Activated naive CD4-positive, alpha-beta T cell treated with anti-CD3 and anti-CD28 coated beads for 36 hours (primary cell): ENCODE measurements at regions of chr16 and their contacts with region 1.

Region 1: DNA sequence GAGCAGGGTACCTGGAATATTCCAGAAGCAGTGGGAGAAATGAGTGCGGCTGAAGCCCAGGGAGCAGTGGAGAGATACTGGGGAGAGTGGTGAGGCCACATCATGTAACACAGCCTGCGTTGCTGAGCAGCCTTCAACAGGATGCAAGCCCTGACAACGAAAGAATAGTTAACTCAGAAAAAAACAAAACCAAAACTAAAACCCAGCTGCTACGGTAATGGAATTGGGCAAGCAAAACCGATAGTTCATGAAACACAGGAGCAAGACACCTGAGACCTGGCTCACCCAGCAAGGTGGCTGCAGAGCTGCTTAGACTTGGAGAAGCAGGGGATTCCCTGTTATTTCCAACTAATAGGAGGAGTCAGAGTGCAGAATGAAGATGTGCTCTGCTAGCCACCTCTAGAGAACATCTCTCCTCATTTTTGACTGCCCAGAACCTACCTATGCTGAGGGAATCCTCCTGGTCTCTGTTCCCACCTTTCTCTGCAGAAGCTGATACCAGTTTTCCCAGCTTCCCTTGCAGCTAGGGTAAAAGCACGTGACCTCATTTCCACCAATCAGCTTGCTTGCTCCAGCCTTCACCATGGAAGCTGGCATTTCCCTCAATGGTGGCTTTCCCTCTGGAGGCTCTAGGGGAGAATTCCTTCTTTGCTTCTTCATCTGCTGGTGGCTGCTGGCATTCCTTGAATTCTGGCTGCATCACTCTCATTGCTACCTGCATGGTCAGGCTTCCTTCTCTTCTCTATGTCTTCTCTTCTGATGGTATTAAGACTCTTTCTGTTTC is 59.4 kb upstream of the XYLT1 start:
- DNase-seq: peak; percentile 50
- H3K4me3 Mint-ChIP-seq: peak overlapping the region; percentile 65
- H3K27ac Mint-ChIP-seq: peak overlapping the region; percentile 50
- H3K4me1 Mint-ChIP-seq: peaks cover 13% of the 10 kb centered on the region
- H3K27me3 Mint-ChIP-seq: no peaks in the 10 kb centered on the region

Region 2: GRCh38 chr16:17515421-17516210 is 14.6 kb before region 1 on chr16:
- CTCF ChIA-PET with region 1: interaction called, 3 read pairs
- intact Hi-C with region 1: loop called (anchors 1 kb)
- DNase-seq: no peak
- H3K4me3 Mint-ChIP-seq: no peak overlapping the region
- H3K27ac Mint-ChIP-seq: no peak overlapping the region
- H3K4me1 Mint-ChIP-seq: no peaks in the 10 kb centered on the region
- H3K27me3 Mint-ChIP-seq: peaks cover 3% of the 10 kb centered on the region

Region 3: DNA sequence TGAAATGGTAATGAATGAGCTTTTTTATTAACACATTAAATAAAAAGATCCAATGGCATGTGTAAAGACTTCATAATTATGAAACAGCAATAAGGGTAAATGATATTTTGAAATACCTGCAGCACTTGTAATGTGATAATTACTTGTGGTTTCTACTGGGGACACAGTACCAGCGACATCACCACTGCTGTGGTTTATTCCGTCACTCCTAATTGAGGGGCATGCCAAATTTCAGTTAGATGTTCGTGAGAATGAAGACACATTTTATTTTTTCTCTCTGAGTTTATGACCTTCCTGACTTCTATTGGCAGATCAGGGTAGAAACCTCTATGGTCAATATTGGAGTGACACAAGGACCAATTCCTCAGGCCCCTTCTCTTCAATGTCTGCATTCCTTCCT is 72.5 kb after region 1 on chr16:
- CTCF ChIA-PET with region 1: no interaction called
- intact Hi-C with region 1: no loop called
- DNase-seq: no peak
- H3K4me3 Mint-ChIP-seq: no peak overlapping the region
- H3K27ac Mint-ChIP-seq: no peak overlapping the region
- H3K4me1 Mint-ChIP-seq: peaks cover 13% of the 10 kb centered on the region
- H3K27me3 Mint-ChIP-seq: peaks cover 14% of the 10 kb centered on the region

Region 4: DNA sequence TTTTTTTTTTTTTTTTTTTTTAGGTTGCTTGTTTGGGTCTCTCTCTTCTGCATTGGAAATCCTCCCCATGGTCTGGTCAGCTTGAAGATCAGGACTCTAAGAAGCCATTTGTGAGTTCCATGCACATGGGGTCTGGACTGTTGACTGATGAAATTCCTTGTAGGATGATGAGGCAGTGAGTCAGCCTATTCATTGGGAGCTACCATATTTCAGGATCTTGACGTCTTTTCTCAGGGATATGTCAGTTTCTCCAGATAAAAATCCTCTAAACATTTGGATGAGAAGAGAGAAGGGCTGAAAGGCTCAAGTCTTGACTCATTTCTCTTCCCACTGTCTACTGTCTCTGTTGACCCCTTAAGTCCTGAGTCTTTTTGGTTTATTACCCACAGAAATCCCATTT is 273.5 kb after region 1 on chr16:
- CTCF ChIA-PET with region 1: no interaction called
- intact Hi-C with region 1: no loop called
- DNase-seq: no peak
- H3K4me3 Mint-ChIP-seq: no peak overlapping the region
- H3K27ac Mint-ChIP-seq: no peak overlapping the region
- H3K4me1 Mint-ChIP-seq: no peaks in the 10 kb centered on the region
- H3K27me3 Mint-ChIP-seq: peaks cover 29% of the 10 kb centered on the region